ENCODE measurements at regions of chr4 and their contacts with region 1.

Region 1: DNA sequence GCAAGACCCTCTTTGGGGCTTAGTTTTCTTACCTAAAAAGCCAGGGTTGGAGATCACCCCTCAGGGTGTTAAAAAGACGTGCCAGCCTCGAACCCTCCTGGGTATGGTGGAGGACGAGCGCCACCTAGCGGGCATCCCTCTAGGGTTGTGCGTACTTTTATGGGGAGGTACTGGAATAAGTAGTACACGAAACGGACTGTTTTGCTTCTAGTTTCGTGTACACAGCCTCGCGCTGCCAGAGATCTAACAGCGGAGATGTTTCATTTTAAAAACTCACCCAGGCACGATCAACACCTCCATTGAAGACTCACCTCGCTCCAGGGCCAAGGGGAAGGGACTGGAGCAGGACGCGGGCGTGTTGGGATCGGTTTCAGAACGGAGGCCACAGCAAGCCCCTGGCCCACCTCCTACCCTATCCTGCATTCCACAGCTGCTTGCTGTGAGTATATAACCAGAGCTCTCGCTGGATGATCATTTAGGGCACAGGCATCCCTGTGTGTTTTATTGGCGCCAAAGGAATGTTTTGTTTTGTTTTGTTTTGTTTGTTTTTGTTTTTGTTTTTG is 4.8 kb upstream of the NKX3-2 start:
- DNase-seq: peak; percentile 86
- H3K4me3 ChIP-seq: peak overlapping the region in 3 of 4 donors; percentile 13 to 33 (median 28)
- H3K27ac ChIP-seq: peak overlapping the region in 1 of 4 donors; percentile 33
- H3K4me1 ChIP-seq: peaks cover 0 to 45% (median 28%) of the 10 kb centered on the region in 4 donors
- H3K27me3 ChIP-seq: peaks cover 82% of the 10 kb centered on the region
- CTCF ChIP-seq: peak; percentile 89 to 93 (median 90)
- EP300 ChIP-seq: no peak
- POLR2A ChIP-seq: no peak

Region 2: DNA sequence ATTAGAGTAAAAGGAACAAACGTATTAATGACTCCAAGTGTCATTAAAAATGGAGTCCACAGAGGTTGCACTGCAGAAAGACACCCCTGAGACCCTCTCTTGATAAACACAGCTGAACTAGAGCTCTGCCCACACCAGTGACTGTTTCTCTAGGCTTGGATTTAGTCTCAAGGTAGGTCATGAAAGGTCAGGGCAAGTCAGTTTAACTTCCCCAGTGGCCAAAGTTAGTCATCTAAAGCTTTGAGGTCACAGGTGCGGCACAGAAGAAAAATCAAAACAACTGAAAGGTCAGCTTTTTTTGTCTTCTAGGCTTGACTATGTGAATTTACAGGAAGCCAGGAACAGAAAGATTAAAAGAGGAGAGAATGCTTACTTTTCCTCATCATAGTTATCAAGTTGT is 814.5 kb before region 1 on chr4:
- in situ Hi-C with region 1: loop called (anchors 10 to 25 kb)
- intact Hi-C with region 1: loop called (anchors 5 kb)
- DNase-seq: no peak
- H3K4me3 ChIP-seq: no peak overlapping the region
- H3K27ac ChIP-seq: no peak overlapping the region
- H3K4me1 ChIP-seq: no peaks in the 10 kb centered on the region
- H3K27me3 ChIP-seq: no peaks in the 10 kb centered on the region
- CTCF ChIP-seq: no peak
- EP300 ChIP-seq: no peak
- POLR2A ChIP-seq: no peak

Region 3: DNA sequence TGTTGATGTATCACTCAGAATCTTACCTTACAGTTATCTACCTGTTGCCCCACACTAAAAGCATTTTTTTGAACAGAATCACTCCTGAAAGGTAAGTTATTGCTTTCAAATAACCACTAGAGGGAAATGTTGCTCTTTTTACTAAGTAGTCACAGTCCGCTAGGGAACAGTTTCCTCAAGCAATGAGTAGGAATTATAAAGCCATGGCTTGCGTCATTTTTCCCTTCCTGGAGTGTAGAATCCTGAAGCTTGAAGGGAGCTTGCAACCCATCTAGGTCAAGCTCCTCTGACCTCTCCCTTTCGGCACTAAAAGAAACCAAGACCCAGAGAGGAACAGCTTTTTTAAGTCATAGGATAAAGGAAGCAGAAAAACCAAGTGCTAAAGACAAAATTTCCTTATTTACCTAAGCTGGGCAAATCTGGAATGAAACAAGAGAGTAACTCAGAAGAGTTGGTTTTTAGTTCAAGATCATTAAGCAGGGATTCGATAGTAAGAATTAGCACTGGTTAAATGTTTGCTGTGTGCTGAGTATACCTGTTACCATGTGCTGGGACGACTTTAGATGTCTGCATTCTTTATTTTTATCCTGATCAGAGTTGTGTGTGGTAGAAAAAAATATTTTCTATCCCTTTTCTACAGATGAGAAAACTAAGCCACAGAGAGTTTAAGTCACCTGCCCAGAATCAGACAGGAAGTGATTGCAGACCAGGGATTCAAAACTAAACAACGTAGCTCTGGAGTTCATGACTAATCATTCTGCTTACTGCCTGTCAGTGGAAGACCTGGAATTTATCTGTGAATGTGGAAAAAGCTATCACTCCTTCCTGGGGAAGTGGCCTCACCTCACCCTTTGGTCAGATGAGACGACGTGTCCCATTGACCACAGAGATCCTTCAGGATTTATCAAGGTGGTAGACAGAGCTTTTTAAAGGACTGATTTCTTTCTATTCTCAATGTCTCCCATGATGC is 696.4 kb before region 1 on chr4:
- in situ Hi-C with region 1: loop called in 2 of 4 experiments (anchors 10 kb)
- intact Hi-C with region 1: loop called (anchors 5 kb)
- DNase-seq: no peak
- H3K4me3 ChIP-seq: no peak overlapping the region
- H3K27ac ChIP-seq: peak overlapping the region in 1 of 4 donors; percentile 6
- H3K4me1 ChIP-seq: peaks cover 0 to 5% (median 0%) of the 10 kb centered on the region in 4 donors
- H3K27me3 ChIP-seq: no peaks in the 10 kb centered on the region
- CTCF ChIP-seq: peak; percentile 53 to 72 (median 55)
- EP300 ChIP-seq: no peak
- POLR2A ChIP-seq: no peak

Region 4: DNA sequence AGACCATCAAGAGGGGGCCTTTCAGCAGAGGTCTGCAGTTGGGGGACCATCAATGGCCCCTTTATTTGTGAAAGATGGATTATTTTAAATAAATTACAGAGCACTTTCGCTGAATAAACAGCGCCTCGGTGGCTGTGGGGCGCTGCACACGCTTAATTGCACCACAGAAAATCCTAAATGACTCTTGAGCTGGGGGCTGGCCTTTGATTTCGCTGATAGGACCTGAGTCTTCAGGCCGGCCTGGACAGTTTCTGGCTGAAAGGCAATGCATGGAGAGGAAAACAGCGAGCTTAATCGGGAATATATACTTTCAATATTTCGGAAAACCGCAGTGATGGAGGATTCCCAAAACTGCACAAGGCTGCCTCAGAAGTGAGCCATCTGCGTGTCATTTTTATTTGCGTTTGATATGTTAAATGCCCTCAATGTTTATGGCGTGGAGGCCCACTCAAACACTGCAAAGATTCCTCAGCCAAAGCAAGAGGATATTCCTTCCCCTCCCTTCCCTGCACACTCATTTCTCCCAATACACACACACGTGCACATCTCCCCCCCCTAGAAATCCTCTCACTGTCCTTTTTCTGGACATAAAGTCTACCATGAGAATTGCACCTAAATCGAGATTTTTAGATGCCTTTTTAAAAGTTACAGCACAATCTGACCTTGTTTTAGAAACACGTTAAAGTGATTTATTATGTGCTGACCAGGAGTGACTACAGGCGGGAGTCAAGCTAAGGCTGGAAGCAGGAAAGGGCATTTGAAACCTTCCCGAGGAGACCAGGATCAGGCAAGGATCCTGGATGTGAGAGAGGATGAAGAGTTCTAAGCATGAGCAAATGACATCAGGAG is 405.6 kb before region 1 on chr4:
- in situ Hi-C with region 1: no loop called
- intact Hi-C with region 1: loop called (anchors 10 kb)
- DNase-seq: no peak
- H3K4me3 ChIP-seq: no peak overlapping the region
- H3K27ac ChIP-seq: no peak overlapping the region
- H3K4me1 ChIP-seq: no peaks in the 10 kb centered on the region
- H3K27me3 ChIP-seq: no peaks in the 10 kb centered on the region
- CTCF ChIP-seq: no peak
- EP300 ChIP-seq: no peak
- POLR2A ChIP-seq: no peak

Region 5: GRCh38 chr4:13298655-13299054 is 250.4 kb before region 1 on chr4:
- in situ Hi-C with region 1: no loop called
- intact Hi-C with region 1: loop called (anchors 2 kb)
- DNase-seq: peak; percentile 46
- H3K4me3 ChIP-seq: no peak overlapping the region
- H3K27ac ChIP-seq: peak overlapping the region; percentile 61 to 86 (median 70)
- H3K4me1 ChIP-seq: peaks cover 0 to 6% (median 0%) of the 10 kb centered on the region in 4 donors
- H3K27me3 ChIP-seq: no peaks in the 10 kb centered on the region
- CTCF ChIP-seq: peak in 3 of 5 experiments; percentile 12 to 23 (median 15)
- EP300 ChIP-seq: peak; percentile 77
- POLR2A ChIP-seq: no peak

Region 6: GRCh38 chr4:13399257-13399656 is 149.8 kb before region 1 on chr4:
- in situ Hi-C with region 1: no loop called
- intact Hi-C with region 1: loop called (anchors 10 kb)
- DNase-seq: no peak
- H3K4me3 ChIP-seq: no peak overlapping the region
- H3K27ac ChIP-seq: no peak overlapping the region
- H3K4me1 ChIP-seq: peaks cover 0 to 6% (median 0%) of the 10 kb centered on the region in 4 donors
- H3K27me3 ChIP-seq: no peaks in the 10 kb centered on the region
- CTCF ChIP-seq: no peak
- EP300 ChIP-seq: no peak
- POLR2A ChIP-seq: no peak

Region 7: GRCh38 chr4:13484122-13484748 is 64.8 kb before region 1 on chr4 and contains the start of gene RAB28:
- in situ Hi-C with region 1: no loop called
- intact Hi-C with region 1: loop called (anchors 5 kb)
- DNase-seq: peak; percentile 96
- H3K4me3 ChIP-seq: peak within 1 kb of the TSS; percentile 73 to 97 (median 78)
- H3K27ac ChIP-seq: peak within 1 kb of the TSS; percentile 90 to 97 (median 94)
- H3K4me1 ChIP-seq: peaks cover 0 to 33% (median 13%) of the 10 kb centered on the region in 4 donors
- H3K27me3 ChIP-seq: peaks cover 3% of the 10 kb centered on the region
- CTCF ChIP-seq: no peak
- EP300 ChIP-seq: no peak
- POLR2A ChIP-seq: peak; percentile 71
- total RNA-seq, gene RAB28: 6.4 to 19.5 (median 17.8) TPM

Measured in transverse colon (tissue), 4 donors.